ENCODE measurements at regions of chr7 and their contacts with region 1.

Region 1: DNA sequence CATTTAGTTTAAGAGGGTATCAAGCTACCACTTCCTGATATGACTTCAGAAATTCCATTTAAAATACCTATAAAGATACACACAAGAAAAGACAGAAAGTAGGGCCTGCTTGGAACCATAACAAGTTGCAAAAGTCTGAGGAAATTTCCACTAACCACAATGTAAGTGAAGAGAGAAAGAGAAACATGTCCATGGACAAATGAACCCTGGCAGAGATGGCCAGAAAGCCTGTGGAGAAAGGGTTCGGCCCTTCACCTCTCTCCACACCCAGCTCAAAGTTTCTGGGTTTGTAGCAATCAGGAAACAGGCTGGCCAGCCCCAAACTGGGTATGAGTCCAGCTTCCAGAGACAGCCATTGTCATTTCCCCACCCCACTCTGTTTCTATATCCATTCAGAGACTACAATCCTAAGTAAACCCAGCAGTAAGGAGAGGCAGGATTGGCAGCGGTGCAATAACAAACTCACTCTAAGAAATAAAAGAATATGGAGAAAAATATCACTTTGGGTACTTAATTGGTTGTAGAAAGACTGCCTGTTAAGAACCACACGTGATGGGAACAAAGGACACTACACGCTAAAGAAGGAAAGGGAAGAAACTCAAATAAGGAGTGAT is 71.1 kb downstream of the STK17A start:
- DNase-seq: no peak
- ATAC-seq: no peak
- H3K4me3 Mint-ChIP-seq: no peak overlapping the region
- H3K27ac Mint-ChIP-seq: peak overlapping the region; percentile 33
- H3K4me1 Mint-ChIP-seq: peaks cover 72% of the 10 kb centered on the region
- H3K27me3 Mint-ChIP-seq: no peaks in the 10 kb centered on the region
- CTCF ChIP-seq: no peak

Region 2: GRCh38 chr7:43669286-43670081 is 15.5 kb after region 1 on chr7:
- CTCF ChIA-PET with region 1: no interaction called
- POLR2A ChIA-PET with region 1: interaction called, 17 read pairs
- intact Hi-C with region 1: loop called (anchors 1 kb)
- DNase-seq: no peak
- ATAC-seq: peak; percentile 73
- H3K4me3 Mint-ChIP-seq: peak overlapping the region; percentile 57
- H3K27ac Mint-ChIP-seq: peak overlapping the region; percentile 72
- H3K4me1 Mint-ChIP-seq: peaks cover 72% of the 10 kb centered on the region
- H3K27me3 Mint-ChIP-seq: no peaks in the 10 kb centered on the region
- CTCF ChIP-seq: no peak

Measured in activated B cell treated with CpG ODN at 0.5 μM for 24 hours (primary cell).